ENCODE measurements at regions of chr6 and their contacts with region 1.

Region 1: DNA sequence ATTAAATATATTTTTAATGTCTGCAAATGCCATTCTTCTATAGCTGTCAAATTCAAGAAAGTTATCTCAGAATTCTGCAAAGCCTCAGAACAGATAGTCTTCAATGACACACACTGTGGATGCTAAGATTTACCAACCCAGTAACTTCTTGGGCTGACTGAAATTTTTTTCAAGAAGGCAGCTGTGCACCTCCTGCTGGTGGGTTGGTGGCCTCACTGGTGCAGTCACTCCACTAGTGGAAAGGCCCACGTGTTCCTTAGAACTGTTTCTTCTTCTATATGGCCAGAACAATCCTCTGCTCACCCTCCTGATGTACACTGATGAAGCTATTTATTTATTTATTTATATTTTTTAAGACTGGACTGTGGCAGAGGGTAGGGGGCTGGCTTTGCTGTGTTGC is 28.1 kb upstream of the MTCL3 start:
- DNase-seq: no peak
- ATAC-seq: no peak

Region 2: GRCh38 chr6:127186889-127187288 is 360.3 kb before region 1 on chr6:
- intact Hi-C with region 1: loop called in 1 of 2 experiments (anchors 10 kb)
- DNase-seq: peak; percentile 65
- ATAC-seq: peak in 1 of 2 donors; percentile 35

Region 3: DNA sequence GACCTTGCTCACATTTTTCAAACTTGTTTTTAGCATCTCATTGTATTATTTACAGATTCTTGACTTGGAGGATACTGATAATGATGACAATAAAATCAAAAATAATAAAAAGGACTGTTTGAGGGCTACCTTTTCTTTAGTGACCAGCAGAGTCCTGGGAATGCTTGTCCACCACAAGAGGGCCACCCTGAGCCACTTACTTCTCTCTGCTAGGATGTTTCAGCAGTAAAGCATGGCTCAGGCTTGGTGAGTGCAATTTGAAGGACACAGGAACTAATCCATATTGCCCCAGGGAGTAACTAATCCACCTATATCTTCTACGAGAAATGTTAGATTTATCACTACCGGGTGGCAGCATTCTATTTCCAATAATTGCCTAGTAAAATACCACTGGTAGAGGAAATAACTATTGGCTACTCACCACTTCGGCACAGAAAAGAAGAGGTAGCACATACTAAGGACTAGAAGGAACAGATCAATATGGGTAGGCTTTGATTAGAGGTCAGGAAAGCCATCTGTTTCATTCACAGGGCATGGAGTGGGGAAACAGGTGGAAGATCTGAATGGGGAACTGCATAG is 82.2 kb before region 1 on chr6:
- intact Hi-C with region 1: loop called (anchors 10 kb)
- DNase-seq: peak; percentile 69
- ATAC-seq: peak; percentile 89 to 91

Region 4: DNA sequence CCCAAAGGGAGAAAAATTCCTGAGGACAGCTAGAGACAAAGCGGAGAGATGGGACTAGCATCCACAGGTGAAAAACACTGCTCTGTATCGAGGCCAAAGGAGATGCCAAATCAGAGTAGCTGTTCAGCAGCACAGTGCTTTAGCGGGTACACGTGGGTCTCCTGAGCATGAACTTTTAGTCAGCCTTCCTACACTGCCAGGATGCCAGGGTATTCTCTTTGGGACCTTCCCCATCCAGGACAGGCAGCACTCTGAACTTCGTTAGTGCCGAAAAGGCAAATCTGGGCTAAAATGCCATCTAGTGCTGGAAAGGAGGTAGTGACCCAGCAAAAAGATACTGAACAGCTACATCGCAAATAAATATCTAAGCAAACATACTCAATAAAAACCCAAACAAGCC is 94.7 kb after region 1 on chr6:
- intact Hi-C with region 1: no loop called
- DNase-seq: no peak
- ATAC-seq: peak in 1 of 2 donors; percentile 49